ENCODE measurements at regions of chr9 and their contacts with region 1.

Region 1: GRCh38 chr9:19174127-19174912 is 47.0 kb upstream of the PLIN2 start:
- DNase-seq: peak; percentile 93
- ATAC-seq: peak; percentile 97
- H3K4me3 ChIP-seq: no peak overlapping the region
- H3K27ac ChIP-seq: no peak overlapping the region
- H3K4me1 ChIP-seq: no peaks in the 10 kb centered on the region
- H3K27me3 ChIP-seq: no peaks in the 10 kb centered on the region
- CTCF ChIP-seq: peak; percentile 78
- POLR2A ChIP-seq: no peak
- RAD21 ChIP-seq: peak; percentile 84

Region 2: GRCh38 chr9:18490635-18491370 is 683.5 kb before region 1 on chr9:
- CTCF ChIA-PET with region 1: no interaction called
- POLR2A ChIA-PET with region 1: no interaction called
- dilution Hi-C with region 1: no loop called
- in situ Hi-C with region 1: loop called (anchors 25 kb)
- intact Hi-C with region 1: no loop called
- DNase-seq: peak; percentile 99
- ATAC-seq: peak; percentile 78
- H3K4me3 ChIP-seq: peak overlapping the region; percentile 13
- H3K27ac ChIP-seq: peak overlapping the region; percentile 77
- H3K4me1 ChIP-seq: peaks cover 5% of the 10 kb centered on the region
- H3K27me3 ChIP-seq: no peaks in the 10 kb centered on the region
- CTCF ChIP-seq: no peak
- POLR2A ChIP-seq: peak; percentile 77
- RAD21 ChIP-seq: peak; percentile 35

Region 3: DNA sequence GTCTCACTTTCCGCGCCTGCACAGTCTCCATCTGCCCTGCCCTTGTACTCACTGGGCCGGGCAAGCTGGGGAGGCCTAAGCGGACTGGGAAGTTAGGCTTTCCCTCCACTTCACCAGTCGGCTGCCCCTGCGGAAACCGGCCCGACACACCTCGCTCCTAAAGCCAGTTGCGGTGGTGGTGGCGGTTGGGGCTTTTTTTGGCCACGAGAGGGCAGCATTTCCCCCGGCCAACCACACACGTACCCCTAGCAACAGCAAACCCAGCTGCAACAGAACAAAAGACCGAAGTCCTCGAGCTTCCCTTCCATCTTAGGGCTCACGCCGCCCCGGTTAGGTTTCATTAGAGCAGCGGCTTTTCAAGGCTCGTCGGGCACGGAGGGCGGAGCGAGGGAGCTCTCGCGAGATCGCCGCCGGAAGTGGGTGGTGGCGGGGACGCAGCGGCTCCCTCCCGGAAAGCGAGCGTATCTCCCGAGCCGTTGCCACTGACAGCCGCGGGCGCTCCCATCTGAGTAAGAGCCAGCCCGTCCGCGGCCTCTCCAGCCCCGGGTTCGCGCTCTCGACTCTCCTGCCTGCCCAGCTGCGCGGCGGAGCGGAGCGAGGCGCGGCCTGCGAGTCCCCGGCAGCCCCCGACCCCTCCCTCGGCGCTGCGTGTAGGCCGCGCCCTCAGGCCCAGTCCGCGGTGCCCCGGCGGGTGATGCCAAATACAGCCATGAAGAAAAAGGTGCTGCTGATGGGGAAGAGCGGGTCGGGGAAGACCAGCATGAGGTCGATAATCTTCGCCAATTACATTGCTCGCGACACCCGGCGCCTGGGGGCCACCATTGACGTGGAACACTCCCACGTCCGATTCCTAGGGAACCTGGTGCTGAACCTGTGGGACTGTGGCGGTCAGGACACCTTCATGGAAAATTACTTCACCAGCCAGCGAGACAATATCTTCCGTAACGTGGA is 125.1 kb before region 1 on chr9 and contains the start of gene RRAGA:
- CTCF ChIA-PET with region 1: interaction called, 4 read pairs
- POLR2A ChIA-PET with region 1: interaction called, 5 read pairs
- dilution Hi-C with region 1: no loop called
- in situ Hi-C with region 1: loop called (anchors 10 kb)
- intact Hi-C with region 1: loop called (anchors 1 kb)
- DNase-seq: peak; percentile 96
- ATAC-seq: peak; percentile 93
- H3K4me3 ChIP-seq: peak within 1 kb of the TSS; percentile 74
- H3K27ac ChIP-seq: peak within 1 kb of the TSS; percentile 96
- H3K4me1 ChIP-seq: peaks cover 2% of the 10 kb centered on the region; the same call in 1 of the 2 replicates
- H3K27me3 ChIP-seq: no peaks in the 10 kb centered on the region
- CTCF ChIP-seq: peak; percentile 89
- POLR2A ChIP-seq: peak; percentile 97
- RAD21 ChIP-seq: peak; percentile 62
- total RNA-seq, gene RRAGA: 63.3 and 74.7 TPM in 2 replicates

Region 4: DNA sequence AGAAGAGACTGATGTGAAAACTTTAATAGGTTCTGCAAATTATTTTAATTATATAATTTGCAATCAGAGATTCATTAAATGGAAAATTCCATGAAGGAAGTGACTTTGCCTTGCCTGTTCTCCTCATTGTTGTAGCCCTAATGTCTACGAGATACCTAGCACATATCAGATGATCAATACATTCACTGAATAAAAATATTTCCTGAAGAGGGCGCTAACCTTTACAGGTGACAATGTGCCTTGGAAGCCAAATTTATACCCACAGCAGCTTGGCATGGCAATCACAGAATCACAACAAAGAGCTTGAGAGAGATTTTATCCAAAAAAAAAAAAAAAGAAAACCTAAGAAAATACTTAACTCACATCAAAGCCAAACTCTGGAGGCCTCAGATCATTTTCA is 89.0 kb before region 1 on chr9:
- CTCF ChIA-PET with region 1: interaction called, 3 read pairs
- POLR2A ChIA-PET with region 1: no interaction called
- dilution Hi-C with region 1: no loop called
- in situ Hi-C with region 1: no loop called
- intact Hi-C with region 1: loop called (anchors 5 kb)
- DNase-seq: no peak
- ATAC-seq: no peak
- H3K4me3 ChIP-seq: no peak overlapping the region
- H3K27ac ChIP-seq: no peak overlapping the region
- H3K4me1 ChIP-seq: no peaks in the 10 kb centered on the region
- H3K27me3 ChIP-seq: no peaks in the 10 kb centered on the region
- CTCF ChIP-seq: peak; percentile 19; the same call in 1 of the 2 replicates
- POLR2A ChIP-seq: no peak
- RAD21 ChIP-seq: no peak

Region 5: GRCh38 chr9:19102631-19103345 is 71.5 kb before region 1 on chr9 and contains the start of gene HAUS6:
- CTCF ChIA-PET with region 1: no interaction called
- POLR2A ChIA-PET with region 1: no interaction called
- dilution Hi-C with region 1: no loop called
- in situ Hi-C with region 1: no loop called
- intact Hi-C with region 1: loop called (anchors 1 kb)
- DNase-seq: peak; percentile 96
- ATAC-seq: peak; percentile 99
- H3K4me3 ChIP-seq: peak within 1 kb of the TSS; percentile 62
- H3K27ac ChIP-seq: peak within 1 kb of the TSS; percentile 59
- H3K4me1 ChIP-seq: peaks cover 4% of the 10 kb centered on the region; the same call in 1 of the 2 replicates
- H3K27me3 ChIP-seq: no peaks in the 10 kb centered on the region
- CTCF ChIP-seq: peak; percentile 45
- POLR2A ChIP-seq: peak; percentile 56; the same call in 1 of the 2 replicates
- RAD21 ChIP-seq: peak; percentile 20; the same call in 1 of the 2 replicates
- total RNA-seq, gene HAUS6: 13.3 and 21.4 TPM in 2 replicates

Region 6: GRCh38 chr9:19127881-19128500 is 46.3 kb before region 1 on chr9:
- CTCF ChIA-PET with region 1: interaction called, 4 read pairs
- POLR2A ChIA-PET with region 1: no interaction called
- dilution Hi-C with region 1: no loop called
- in situ Hi-C with region 1: no loop called
- intact Hi-C with region 1: loop called (anchors 2 kb)
- DNase-seq: no peak
- ATAC-seq: peak; percentile 27
- H3K4me3 ChIP-seq: peak overlapping the region; percentile 65
- H3K27ac ChIP-seq: peak overlapping the region; percentile 72
- H3K4me1 ChIP-seq: peaks cover 16% of the 10 kb centered on the region
- H3K27me3 ChIP-seq: no peaks in the 10 kb centered on the region
- CTCF ChIP-seq: no peak
- POLR2A ChIP-seq: no peak
- RAD21 ChIP-seq: no peak

Region 7: DNA sequence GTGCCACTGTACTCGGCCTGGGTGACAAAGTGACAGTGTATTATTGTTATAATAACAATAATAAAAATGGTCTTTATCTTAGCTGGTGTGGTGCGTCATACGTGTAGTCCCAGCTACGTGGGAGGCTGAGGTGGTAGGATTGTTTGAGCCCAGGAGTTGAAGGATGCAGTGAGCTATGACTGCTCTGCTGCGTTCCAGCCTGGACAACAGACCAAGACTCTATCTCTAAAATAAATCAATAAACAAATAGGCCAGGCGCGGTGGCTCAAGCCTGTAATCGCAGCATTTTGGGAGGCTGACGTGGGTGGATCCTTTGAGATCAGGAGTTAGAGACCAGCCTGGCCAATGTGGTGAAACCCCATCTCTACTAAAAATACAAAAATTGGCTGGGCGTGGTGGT is 47.0 kb after region 1 on chr9:
- CTCF ChIA-PET with region 1: no interaction called
- POLR2A ChIA-PET with region 1: no interaction called
- dilution Hi-C with region 1: no loop called
- in situ Hi-C with region 1: no loop called
- intact Hi-C with region 1: no loop called
- DNase-seq: no peak
- ATAC-seq: no peak
- H3K4me3 ChIP-seq: no peak overlapping the region
- H3K27ac ChIP-seq: no peak overlapping the region
- H3K4me1 ChIP-seq: no peaks in the 10 kb centered on the region
- H3K27me3 ChIP-seq: no peaks in the 10 kb centered on the region; the same call in 1 of the 2 replicates
- CTCF ChIP-seq: no peak
- POLR2A ChIP-seq: no peak
- RAD21 ChIP-seq: no peak

Region 8: GRCh38 chr9:19577411-19577810 is 403.1 kb after region 1 on chr9:
- CTCF ChIA-PET with region 1: no interaction called
- POLR2A ChIA-PET with region 1: no interaction called
- dilution Hi-C with region 1: no loop called
- in situ Hi-C with region 1: no loop called
- intact Hi-C with region 1: no loop called
- DNase-seq: no peak
- ATAC-seq: no peak
- H3K4me3 ChIP-seq: no peak overlapping the region
- H3K27ac ChIP-seq: no peak overlapping the region
- H3K4me1 ChIP-seq: no peaks in the 10 kb centered on the region
- H3K27me3 ChIP-seq: no peaks in the 10 kb centered on the region
- CTCF ChIP-seq: no peak
- POLR2A ChIP-seq: no peak
- RAD21 ChIP-seq: no peak

Measured in IMR-90 (cell line).